Posterior vena cava (tissue), 2 donors: ENCODE measurements at regions of chr6 and their contacts with region 1.

Region 1: DNA sequence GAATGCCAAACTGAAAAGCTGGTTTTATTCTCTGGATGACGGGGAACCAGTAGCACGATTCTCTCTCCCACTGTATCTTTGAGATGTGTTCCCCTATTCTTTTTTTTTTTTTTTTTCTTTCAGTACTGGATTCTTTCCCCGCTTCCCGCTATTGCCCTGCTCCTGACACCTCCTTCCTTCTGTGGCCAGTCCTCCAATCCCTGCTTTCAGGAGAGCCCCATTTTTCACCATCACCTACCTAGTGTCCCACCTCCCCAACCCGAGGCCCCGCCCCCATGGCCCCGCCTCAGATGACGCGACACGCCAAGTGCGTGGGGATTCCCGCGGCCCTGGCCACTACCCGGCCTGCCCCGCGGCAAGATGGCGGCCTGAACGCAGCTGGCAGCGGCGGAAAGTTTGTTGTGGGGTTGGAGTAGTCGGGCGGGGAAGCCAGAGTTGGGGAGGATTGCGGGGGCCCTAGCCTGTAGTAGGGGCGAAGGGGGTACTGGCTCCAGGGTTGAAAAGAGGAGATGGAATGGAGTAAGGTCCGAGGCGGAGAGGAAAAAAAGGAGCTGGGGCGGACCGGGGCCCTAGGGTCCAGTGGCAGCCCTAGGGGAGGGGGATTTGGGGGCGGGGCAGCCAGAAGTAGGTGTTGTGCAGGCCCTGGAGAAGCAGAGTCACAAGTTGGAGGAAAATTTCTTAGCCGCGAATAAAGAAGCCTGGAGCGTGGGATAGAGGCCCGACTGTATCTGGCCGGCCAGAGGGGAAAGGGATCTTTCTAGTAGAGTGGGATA is at the start of gene TJAP1:
- DNase-seq: peak; percentile 97
- total RNA-seq, gene TJAP1: 23.4 to 25.4 TPM

Region 2: DNA sequence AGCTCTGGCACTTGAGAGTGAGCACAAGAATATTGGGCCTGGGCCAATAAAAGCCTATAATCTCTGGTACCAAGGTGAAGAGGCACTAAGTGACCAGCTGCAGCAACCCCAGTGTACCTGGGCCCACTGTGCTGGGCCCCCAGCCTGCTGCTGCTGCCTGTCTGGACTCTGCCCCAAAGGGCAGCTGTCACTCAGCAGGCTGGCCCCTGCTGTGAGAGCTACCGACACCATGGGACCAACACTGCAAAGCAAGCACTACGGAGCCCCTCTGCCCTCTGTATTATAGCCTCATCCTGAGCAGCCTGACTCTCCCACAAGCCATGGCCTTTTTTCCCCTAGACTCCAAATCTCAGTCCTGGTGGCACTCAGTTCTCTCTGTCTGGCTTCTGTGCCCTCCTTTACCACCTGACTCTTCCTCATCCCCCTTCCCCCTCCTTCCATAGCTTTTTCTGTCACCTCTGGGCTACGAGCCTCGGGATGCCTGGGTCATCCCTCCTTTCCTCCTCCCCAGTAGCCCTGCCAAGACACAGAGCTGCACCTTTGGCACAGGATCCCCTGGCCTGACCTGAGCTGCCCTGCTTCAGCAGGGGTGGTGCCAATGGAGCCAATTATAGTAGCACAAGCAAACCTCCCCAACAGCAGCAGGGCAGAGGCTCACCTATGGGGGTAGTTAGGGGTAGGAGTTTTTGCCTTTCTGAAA is 441.8 kb before region 1 on chr6:
- intact Hi-C with region 1: no loop called
- DNase-seq: no peak

Region 3: GRCh38 chr6:43524483-43524961 is 47.1 kb after region 1 on chr6:
- intact Hi-C with region 1: loop called in 1 of 2 experiments (anchors 2 kb)
- DNase-seq: no peak